ENCODE measurements at regions of chr3 and their contacts with region 1.

Region 1: GRCh38 chr3:106275592-106275991 is 406.8 kb upstream of the CBLB start:
- DNase-seq: no peak
- ATAC-seq: no peak
- H3K4me3 ChIP-seq: no peak overlapping the region
- H3K4me3 Mint-ChIP-seq: no peak overlapping the region
- H3K27ac ChIP-seq: no peak overlapping the region
- H3K27ac Mint-ChIP-seq: no peak overlapping the region
- H3K4me1 ChIP-seq: no peaks in the 10 kb centered on the region
- H3K4me1 Mint-ChIP-seq: peaks cover 0 to 15% (median 12%) of the 10 kb centered on the region in 3 donors
- H3K27me3 ChIP-seq: no peaks in the 10 kb centered on the region
- H3K27me3 Mint-ChIP-seq: no peaks in the 10 kb centered on the region

Region 2: GRCh38 chr3:105876780-105877327 is 398.7 kb before region 1 on chr3:
- CTCF ChIA-PET with region 1: interaction called in 1 of 2 experiments, 12 read pairs
- POLR2A ChIA-PET with region 1: no interaction called
- DNase-seq: peak in 2 of 35 experiments; percentile 15 to 53
- ATAC-seq: peak; percentile 63 to 78 (median 73)
- H3K4me3 ChIP-seq: no peak overlapping the region
- H3K4me3 Mint-ChIP-seq: peak overlapping the region; percentile 44 to 73 (median 59)
- H3K27ac ChIP-seq: peak overlapping the region; percentile 60
- H3K27ac Mint-ChIP-seq: peak overlapping the region; percentile 88 to 93
- H3K4me1 ChIP-seq: peaks cover 4 to 19% of the 10 kb centered on the region in 2 experiments
- H3K4me1 Mint-ChIP-seq: peaks cover 14 to 30% (median 29%) of the 10 kb centered on the region in 3 donors
- H3K27me3 ChIP-seq: no peaks in the 10 kb centered on the region
- H3K27me3 Mint-ChIP-seq: no peaks in the 10 kb centered on the region

Measured in T-cell (primary cell).